ENCODE measurements at regions of chr3 and their contacts with region 1.

Region 1: DNA sequence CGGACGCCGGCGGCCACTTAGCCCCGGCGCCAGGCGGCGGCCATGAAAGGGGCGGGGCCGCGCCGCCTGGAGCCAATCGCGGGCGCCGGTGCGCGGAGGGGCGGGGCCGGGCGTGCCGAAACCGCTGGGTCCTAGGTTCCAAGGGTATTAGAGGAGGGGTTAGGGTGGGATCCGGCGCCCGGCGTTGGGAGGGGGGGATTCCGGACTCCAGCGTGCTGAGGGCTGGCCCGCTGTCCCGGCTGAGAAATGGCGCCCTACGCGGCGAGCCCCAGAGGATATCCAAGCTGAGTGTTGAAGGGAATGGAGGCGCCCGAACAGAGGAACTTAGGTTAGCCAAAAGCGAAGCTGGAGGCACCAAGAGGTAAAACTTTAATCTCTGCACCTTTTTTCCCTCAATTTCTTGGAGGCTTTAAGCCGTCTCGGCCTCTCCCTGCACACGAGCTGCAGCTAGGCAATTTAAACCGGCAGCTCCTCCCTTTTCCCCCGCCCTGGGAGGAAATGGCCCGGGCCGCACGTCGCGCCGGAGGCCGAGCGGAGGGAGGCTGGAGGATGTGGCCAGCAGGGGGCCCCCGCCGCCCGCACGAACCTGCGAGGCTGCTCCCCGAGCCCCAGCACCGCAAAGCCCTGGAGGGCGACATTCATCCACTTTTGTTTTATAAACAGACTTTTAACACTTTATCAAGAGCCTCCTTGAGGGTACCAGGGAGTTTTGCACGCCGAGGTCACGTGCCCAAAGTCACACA is at the start of gene XXYLT1:
- DNase-seq: peak; percentile 92 to 93 (median 92)
- ATAC-seq: peak; percentile 93
- H3K4me3 ChIP-seq: peak within 1 kb of the TSS; percentile 57
- H3K27ac ChIP-seq: peak within 1 kb of the TSS; percentile 66
- H3K4me1 ChIP-seq: peaks cover 19 to 22% of the 10 kb centered on the region in 2 experiments
- H3K27me3 ChIP-seq: no peaks in the 10 kb centered on the region
- CTCF ChIP-seq: peak; percentile 96 to 99 (median 99)
- EP300 ChIP-seq: no peak
- POLR2A ChIP-seq: peak; percentile 41
- RAD21 ChIP-seq: peak; percentile 98 to 99
- polyA plus RNA-seq, gene XXYLT1: 1.9 to 2.9 TPM

Region 2: GRCh38 chr3:195028877-195029606 is 242.2 kb before region 1 on chr3:
- CTCF ChIA-PET with region 1: no interaction called
- POLR2A ChIA-PET with region 1: no interaction called
- in situ Hi-C with region 1: no loop called
- intact Hi-C with region 1: no loop called
- DNase-seq: no peak
- ATAC-seq: no peak
- H3K4me3 ChIP-seq: no peak overlapping the region
- H3K27ac ChIP-seq: no peak overlapping the region; the same call in 2 of the 3 replicates
- H3K4me1 ChIP-seq: peaks cover 0 to 4% of the 10 kb centered on the region in 2 experiments; a peak in 1 of 5 replicates
- H3K27me3 ChIP-seq: peaks cover 48 to 67% of the 10 kb centered on the region in 2 experiments
- CTCF ChIP-seq: no peak
- EP300 ChIP-seq: no peak
- POLR2A ChIP-seq: no peak
- RAD21 ChIP-seq: no peak

Region 3: GRCh38 chr3:195442573-195443390 is 171.5 kb after region 1 on chr3 and contains the start of gene ACAP2:
- CTCF ChIA-PET with region 1: no interaction called
- POLR2A ChIA-PET with region 1: interaction called, 6 read pairs
- in situ Hi-C with region 1: no loop called
- intact Hi-C with region 1: loop called (anchors 2 kb)
- DNase-seq: peak; percentile 99 to 100 (median 100)
- ATAC-seq: peak; percentile 94
- H3K4me3 ChIP-seq: peak within 1 kb of the TSS; percentile 87
- H3K27ac ChIP-seq: peak within 1 kb of the TSS; percentile 89
- H3K4me1 ChIP-seq: peaks cover 16 to 21% of the 10 kb centered on the region in 2 experiments
- H3K27me3 ChIP-seq: no peaks in the 10 kb centered on the region
- CTCF ChIP-seq: no peak
- EP300 ChIP-seq: no peak
- POLR2A ChIP-seq: peak; percentile 84
- RAD21 ChIP-seq: no peak; a peak in 1 of 4 replicates
- polyA plus RNA-seq, gene ACAP2: 10.6 to 12.3 TPM

Region 4: GRCh38 chr3:195458316-195458717 is 187.0 kb after region 1 on chr3:
- CTCF ChIA-PET with region 1: no interaction called
- POLR2A ChIA-PET with region 1: no interaction called
- in situ Hi-C with region 1: no loop called
- intact Hi-C with region 1: loop called (anchors 5 kb)
- DNase-seq: peak in 2 of 4 experiments; percentile 31 to 55
- ATAC-seq: peak; percentile 74
- H3K4me3 ChIP-seq: no peak overlapping the region
- H3K27ac ChIP-seq: peak overlapping the region; percentile 71
- H3K4me1 ChIP-seq: peaks cover 9 to 28% of the 10 kb centered on the region in 2 experiments; a peak in 4 of 5 replicates
- H3K27me3 ChIP-seq: no peaks in the 10 kb centered on the region
- CTCF ChIP-seq: no peak
- EP300 ChIP-seq: no peak; the same call in 1 of the 2 replicates
- POLR2A ChIP-seq: no peak
- RAD21 ChIP-seq: no peak

Region 5: DNA sequence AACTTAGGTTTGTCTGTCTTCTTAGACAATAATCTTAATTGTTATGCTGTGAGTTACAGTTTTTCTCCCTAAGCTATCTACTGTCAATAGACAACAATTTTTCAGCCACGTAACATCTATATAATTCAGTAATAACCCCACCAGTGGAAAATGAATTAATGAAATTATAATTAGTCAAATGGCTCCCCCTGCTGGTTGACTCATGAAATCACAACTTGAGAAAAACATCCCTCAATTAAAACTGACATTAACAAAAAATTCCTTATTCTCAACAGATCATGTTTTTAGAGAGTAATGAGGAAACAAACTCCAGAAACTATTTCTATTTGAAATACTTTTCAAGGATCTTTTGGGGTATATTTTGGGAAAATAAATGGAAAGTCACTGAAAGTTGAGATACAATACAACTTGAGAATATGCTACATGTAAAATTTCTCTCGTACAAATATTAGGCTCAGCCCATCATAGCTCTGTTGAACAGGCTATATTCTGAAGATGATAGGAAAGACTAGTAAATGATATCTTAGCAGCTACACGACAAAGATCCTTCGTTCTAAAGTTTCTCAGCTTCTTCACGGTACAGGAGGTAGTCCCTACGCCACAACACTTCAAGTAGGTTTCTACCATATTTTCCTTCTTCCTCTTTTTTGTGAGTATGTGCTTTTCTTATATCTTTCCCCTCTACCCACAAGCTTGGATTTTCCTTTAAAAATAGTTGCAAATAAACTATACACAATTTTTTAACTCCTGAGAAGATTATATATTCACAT is 251.2 kb after region 1 on chr3:
- CTCF ChIA-PET with region 1: interaction called, 112 read pairs
- POLR2A ChIA-PET with region 1: interaction called, 7 read pairs
- in situ Hi-C with region 1: loop called (anchors 5 kb)
- intact Hi-C with region 1: loop called (anchors 1 kb)
- DNase-seq: peak; percentile 25 to 51 (median 42)
- ATAC-seq: no peak
- H3K4me3 ChIP-seq: no peak overlapping the region
- H3K27ac ChIP-seq: no peak overlapping the region
- H3K4me1 ChIP-seq: peaks cover 4 to 5% of the 10 kb centered on the region in 2 experiments; a peak in 1 of 5 replicates
- H3K27me3 ChIP-seq: no peaks in the 10 kb centered on the region
- CTCF ChIP-seq: peak; percentile 38 to 78 (median 48); a peak in 3 of 6 replicates
- EP300 ChIP-seq: no peak
- POLR2A ChIP-seq: no peak
- RAD21 ChIP-seq: peak; percentile 90 to 92

Region 6: GRCh38 chr3:195542698-195543499 is 271.6 kb after region 1 on chr3 and contains the start of gene PPP1R2:
- CTCF ChIA-PET with region 1: no interaction called
- POLR2A ChIA-PET with region 1: interaction called, 7 read pairs
- in situ Hi-C with region 1: no loop called
- intact Hi-C with region 1: loop called (anchors 5 kb)
- DNase-seq: peak; percentile 94 to 99 (median 97)
- ATAC-seq: peak; percentile 93
- H3K4me3 ChIP-seq: peak within 1 kb of the TSS; percentile 62
- H3K27ac ChIP-seq: peak within 1 kb of the TSS; percentile 86
- H3K4me1 ChIP-seq: peaks cover 17 to 30% of the 10 kb centered on the region in 2 experiments
- H3K27me3 ChIP-seq: no peaks in the 10 kb centered on the region
- CTCF ChIP-seq: no peak
- EP300 ChIP-seq: no peak
- POLR2A ChIP-seq: peak; percentile 95
- RAD21 ChIP-seq: no peak
- polyA plus RNA-seq, gene PPP1R2: 9.4 to 10.5 TPM

Region 7: GRCh38 chr3:195705081-195705991 is 434.0 kb after region 1 on chr3:
- CTCF ChIA-PET with region 1: no interaction called
- POLR2A ChIA-PET with region 1: no interaction called
- in situ Hi-C with region 1: no loop called
- intact Hi-C with region 1: loop called (anchors 10 kb)
- DNase-seq: peak in 3 of 4 experiments; percentile 16 to 28 (median 25)
- ATAC-seq: peak; percentile 42
- H3K4me3 ChIP-seq: no peak overlapping the region
- H3K27ac ChIP-seq: no peak overlapping the region
- H3K4me1 ChIP-seq: peaks cover 4% of the 10 kb centered on the region in 2 experiments; a peak in 3 of 5 replicates
- H3K27me3 ChIP-seq: peaks cover 0 to 7% of the 10 kb centered on the region in 2 experiments; a peak in 1 of 5 replicates
- CTCF ChIP-seq: no peak
- EP300 ChIP-seq: no peak
- POLR2A ChIP-seq: no peak; the same call in 1 of the 2 replicates
- RAD21 ChIP-seq: no peak

Measured in K562 (cell line).